Endothelial cell of umbilical vein (primary cell): ENCODE measurements at regions of chrX and their contacts with region 1.

Region 1: DNA sequence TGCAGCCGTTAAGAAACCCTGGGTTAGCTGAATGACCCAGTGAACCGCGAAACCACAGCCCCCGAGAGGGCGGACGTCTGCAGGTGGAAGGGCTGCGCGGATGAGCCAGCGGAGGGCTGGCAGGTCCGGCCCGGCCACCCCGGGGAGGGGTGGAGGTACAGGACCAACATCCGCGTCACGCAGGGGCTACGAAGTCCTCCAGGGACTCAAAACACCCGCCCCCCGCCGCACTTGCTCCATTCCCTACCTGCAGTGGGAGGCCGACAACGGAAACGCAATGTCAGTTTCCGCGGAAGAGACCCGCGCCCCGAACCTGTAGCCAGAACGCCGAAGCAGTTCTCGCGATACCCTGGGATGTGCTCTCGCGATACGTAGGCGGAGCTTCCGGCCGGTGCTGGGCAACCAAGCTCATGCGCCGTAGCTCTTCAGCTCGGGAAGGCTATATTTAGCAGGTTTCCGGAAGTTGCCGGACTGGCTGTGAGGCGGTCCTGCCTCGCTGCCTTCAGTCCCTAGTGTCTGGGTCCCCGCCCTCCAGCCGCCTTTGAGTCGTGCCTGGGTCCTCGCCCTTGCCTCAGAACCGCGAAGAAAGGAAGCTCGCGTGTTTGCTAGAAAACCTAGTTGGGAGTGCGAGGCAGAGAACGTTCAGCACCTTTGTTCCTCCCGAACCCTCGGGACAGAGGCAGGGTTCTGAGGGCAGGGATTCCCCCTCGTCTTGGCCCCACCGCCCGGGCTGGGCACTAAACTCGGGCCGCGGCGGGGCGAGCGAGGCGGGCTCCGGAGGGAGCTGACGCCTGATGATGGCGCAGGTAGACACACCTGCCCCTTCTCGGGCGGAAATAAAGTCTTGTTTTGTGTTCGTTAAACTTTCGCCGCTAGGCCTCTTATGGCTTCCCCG is at the starts of genes OFD1 and TRAPPC2:
- DNase-seq: peak; percentile 91
- H3K4me3 ChIP-seq: peak within 1 kb of the TSS; percentile 73 to 88 (median 83)
- H3K27ac ChIP-seq: peak within 1 kb of the TSS; percentile 78
- H3K4me1 ChIP-seq: peaks cover 5% of the 10 kb centered on the region
- H3K27me3 ChIP-seq: no peaks in the 10 kb centered on the region
- CTCF ChIP-seq: no peak
- POLR2A ChIP-seq: peak; percentile 71
- total RNA-seq, gene OFD1: 12.0 and 14.4 TPM in 2 replicates
- total RNA-seq, gene TRAPPC2: 13.0 and 14.1 TPM in 2 replicates

Region 2: GRCh38 chrX:13653022-13653693 is 81.4 kb before region 1 on chrX and contains the start of gene TCEANC:
- CTCF ChIA-PET with region 1: interaction called, 3 read pairs
- POLR2A ChIA-PET with region 1: no interaction called
- dilution Hi-C with region 1: no loop called
- intact Hi-C with region 1: loop called (anchors 1 kb)
- DNase-seq: peak; percentile 95
- H3K4me3 ChIP-seq: peak within 1 kb of the TSS; percentile 33 to 89 (median 87)
- H3K27ac ChIP-seq: peak within 1 kb of the TSS; percentile 63
- H3K4me1 ChIP-seq: peaks cover 6% of the 10 kb centered on the region
- H3K27me3 ChIP-seq: no peaks in the 10 kb centered on the region
- CTCF ChIP-seq: no peak
- POLR2A ChIP-seq: peak; percentile 59
- total RNA-seq, gene TCEANC: 0.75 and 1.8 TPM in 2 replicates

Region 3: DNA sequence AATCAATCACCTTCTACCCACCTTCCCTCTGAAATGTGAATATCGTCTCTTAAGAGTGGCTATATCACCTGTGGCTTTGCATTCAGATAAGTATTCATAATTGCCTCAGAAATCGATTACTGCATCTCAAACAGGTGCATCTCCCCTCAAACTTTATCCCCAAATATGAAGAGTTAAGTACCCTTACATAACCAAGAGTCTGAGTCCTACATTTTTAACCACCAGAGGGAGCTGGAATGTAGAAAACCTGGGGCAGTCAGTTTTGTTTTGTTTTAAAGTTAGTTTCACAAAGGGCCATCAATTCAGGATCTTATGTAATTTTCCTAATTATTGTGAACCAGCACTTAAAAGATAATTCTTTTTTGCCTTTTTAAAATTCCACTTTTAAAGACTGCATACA is 75.9 kb before region 1 on chrX:
- CTCF ChIA-PET with region 1: interaction called, 3 read pairs
- POLR2A ChIA-PET with region 1: no interaction called
- dilution Hi-C with region 1: no loop called
- intact Hi-C with region 1: loop called (anchors 1 kb)
- DNase-seq: peak; percentile 52
- H3K4me3 ChIP-seq: no peak overlapping the region
- H3K27ac ChIP-seq: no peak overlapping the region
- H3K4me1 ChIP-seq: peaks cover 3% of the 10 kb centered on the region
- H3K27me3 ChIP-seq: no peaks in the 10 kb centered on the region
- CTCF ChIP-seq: peak; percentile 19 to 24
- POLR2A ChIP-seq: no peak

Region 4: DNA sequence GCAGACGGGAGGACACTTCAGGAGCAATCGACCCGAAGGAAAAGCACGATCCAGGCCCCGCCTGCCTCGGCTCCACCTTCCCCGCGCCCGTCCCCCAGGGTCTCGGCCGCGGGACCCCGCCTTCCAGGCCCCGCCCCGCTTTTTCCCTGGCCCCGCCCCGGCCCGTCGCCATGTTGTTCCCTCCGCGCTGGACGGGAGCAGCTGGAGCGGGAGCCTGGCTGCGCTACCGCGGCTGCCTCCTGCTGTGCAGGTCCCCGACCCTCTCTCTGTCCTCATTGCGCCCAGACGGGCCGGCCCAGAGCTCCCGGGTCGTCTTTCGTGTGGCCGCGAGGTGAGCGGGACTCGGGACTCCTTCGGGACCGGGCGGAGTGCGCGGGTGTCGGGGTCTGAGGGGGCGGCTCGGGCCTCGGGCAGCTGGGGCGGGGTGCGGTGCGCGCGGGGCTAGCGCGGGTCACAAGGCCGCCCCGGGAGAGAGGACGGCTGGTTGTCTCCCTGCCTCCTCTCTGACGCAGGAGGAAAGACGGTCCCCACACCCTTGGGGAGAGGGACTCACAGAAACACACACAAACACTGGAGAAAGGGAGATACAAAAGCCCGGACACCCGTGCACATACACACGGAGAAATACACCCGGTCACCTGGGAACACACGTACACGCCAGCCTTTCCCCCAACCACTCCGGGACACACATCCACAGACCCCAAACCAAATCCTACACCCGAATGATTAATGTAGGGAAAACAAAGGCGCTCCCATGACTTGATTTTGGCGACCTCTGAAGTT is 45.4 kb before region 1 on chrX and contains the start of gene RAB9A:
- CTCF ChIA-PET with region 1: no interaction called
- POLR2A ChIA-PET with region 1: no interaction called
- dilution Hi-C with region 1: no loop called
- intact Hi-C with region 1: loop called (anchors 2 kb)
- DNase-seq: peak; percentile 76
- H3K4me3 ChIP-seq: peak within 1 kb of the TSS; percentile 44 to 77 (median 64)
- H3K27ac ChIP-seq: peak within 1 kb of the TSS; percentile 70
- H3K4me1 ChIP-seq: peaks cover 12% of the 10 kb centered on the region
- H3K27me3 ChIP-seq: no peaks in the 10 kb centered on the region
- CTCF ChIP-seq: no peak
- POLR2A ChIP-seq: peak; percentile 66
- total RNA-seq, gene RAB9A: 17.2 and 19.2 TPM in 2 replicates